WTC11 (cell line): ENCODE measurements at regions of chr1 and their contacts with region 1.

Region 1: GRCh38 chr1:63917571-63918417 is 144.0 kb downstream of the ROR1 start:
- DNase-seq: peak; percentile 78
- ATAC-seq: peak; percentile 73
- H3K4me3 Mint-ChIP-seq: no peak overlapping the region
- H3K27ac Mint-ChIP-seq: peak overlapping the region; percentile 69
- H3K4me1 Mint-ChIP-seq: peaks cover 89% of the 10 kb centered on the region
- H3K27me3 Mint-ChIP-seq: no peaks in the 10 kb centered on the region
- CTCF ChIP-seq: peak; percentile 58

Region 2: GRCh38 chr1:63773815-63774616 is 143.8 kb before region 1 on chr1 and contains the start of gene ROR1:
- CTCF ChIA-PET with region 1: interaction called, 20 read pairs
- POLR2A ChIA-PET with region 1: interaction called, 3 read pairs
- DNase-seq: peak; percentile 95
- ATAC-seq: peak; percentile 83
- H3K4me3 Mint-ChIP-seq: peak within 1 kb of the TSS; percentile 95
- H3K27ac Mint-ChIP-seq: peak within 1 kb of the TSS; percentile 99
- H3K4me1 Mint-ChIP-seq: peaks cover 58% of the 10 kb centered on the region
- H3K27me3 Mint-ChIP-seq: no peaks in the 10 kb centered on the region
- CTCF ChIP-seq: no peak
- total RNA-seq, gene ROR1: 54.6 to 56.3 TPM (median 55.2 TPM) in 3 replicates

Region 3: GRCh38 chr1:63794939-63795378 is 122.8 kb before region 1 on chr1:
- CTCF ChIA-PET with region 1: interaction called, 22 read pairs
- POLR2A ChIA-PET with region 1: no interaction called
- DNase-seq: peak; percentile 42
- ATAC-seq: peak; percentile 51
- H3K4me3 Mint-ChIP-seq: peak overlapping the region; percentile 39
- H3K27ac Mint-ChIP-seq: peak overlapping the region; percentile 98
- H3K4me1 Mint-ChIP-seq: peaks cover 98% of the 10 kb centered on the region
- H3K27me3 Mint-ChIP-seq: no peaks in the 10 kb centered on the region
- CTCF ChIP-seq: no peak

Region 4: GRCh38 chr1:63935143-63935542 is 17.3 kb after region 1 on chr1:
- CTCF ChIA-PET with region 1: interaction called, 23 read pairs
- POLR2A ChIA-PET with region 1: no interaction called
- DNase-seq: no peak
- ATAC-seq: peak; percentile 46
- H3K4me3 Mint-ChIP-seq: no peak overlapping the region
- H3K27ac Mint-ChIP-seq: no peak overlapping the region
- H3K4me1 Mint-ChIP-seq: peaks cover 11% of the 10 kb centered on the region
- H3K27me3 Mint-ChIP-seq: no peaks in the 10 kb centered on the region
- CTCF ChIP-seq: no peak

Region 5: DNA sequence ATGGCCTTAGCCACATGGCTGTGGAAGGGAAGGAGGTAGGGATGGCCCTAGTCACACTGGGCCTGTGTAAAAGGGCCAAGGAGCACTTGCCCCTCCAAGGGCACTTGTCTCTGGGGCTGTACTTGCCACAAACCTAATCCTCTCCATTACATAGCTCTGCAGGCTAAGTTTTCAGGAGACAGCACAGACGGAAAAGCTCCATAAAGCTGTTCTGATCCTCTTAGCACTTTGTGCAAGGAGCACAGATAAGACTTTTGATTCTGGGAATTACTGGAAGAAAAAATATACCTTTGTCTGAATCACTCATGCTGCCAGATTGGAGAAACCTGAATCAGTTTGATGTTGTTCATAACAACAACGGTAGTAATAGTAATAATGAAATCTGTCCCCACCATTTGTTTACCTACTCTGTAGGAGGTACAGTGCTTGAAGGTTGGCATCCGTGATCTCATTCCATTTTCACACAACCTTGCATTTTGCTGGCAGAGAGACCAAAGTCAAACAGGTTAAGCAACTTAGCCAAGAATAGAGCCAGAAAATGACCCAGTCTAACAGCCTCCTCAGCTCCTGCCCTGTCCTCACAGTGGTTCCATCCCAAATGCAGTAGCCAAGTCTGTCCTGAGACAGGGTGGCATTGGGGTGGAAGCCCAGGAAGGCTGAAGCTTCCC is 63.1 kb after region 1 on chr1:
- CTCF ChIA-PET with region 1: no interaction called
- POLR2A ChIA-PET with region 1: no interaction called
- DNase-seq: no peak
- ATAC-seq: no peak; the same call in 1 of the 2 replicates
- H3K4me3 Mint-ChIP-seq: no peak overlapping the region
- H3K27ac Mint-ChIP-seq: no peak overlapping the region; the same call in 1 of the 2 replicates
- H3K4me1 Mint-ChIP-seq: peaks cover 60% of the 10 kb centered on the region
- H3K27me3 Mint-ChIP-seq: no peaks in the 10 kb centered on the region
- CTCF ChIP-seq: no peak

Region 6: GRCh38 chr1:64228167-64228957 is 310.6 kb after region 1 on chr1:
- CTCF ChIA-PET with region 1: no interaction called
- POLR2A ChIA-PET with region 1: interaction called, 13 read pairs
- DNase-seq: no peak
- ATAC-seq: no peak
- H3K4me3 Mint-ChIP-seq: no peak overlapping the region
- H3K27ac Mint-ChIP-seq: no peak overlapping the region
- H3K4me1 Mint-ChIP-seq: peaks cover 6% of the 10 kb centered on the region
- H3K27me3 Mint-ChIP-seq: no peaks in the 10 kb centered on the region
- CTCF ChIP-seq: no peak